Activated CD4-positive, alpha-beta T cell treated with anti-CD3 and anti-CD28 coated beads, Interleukin-2, amount 10 ng/mL, durations not matched to agents 7 days and 5 days (primary cell): ENCODE measurements at regions of chr3 and their contacts with region 1.

Region 1: DNA sequence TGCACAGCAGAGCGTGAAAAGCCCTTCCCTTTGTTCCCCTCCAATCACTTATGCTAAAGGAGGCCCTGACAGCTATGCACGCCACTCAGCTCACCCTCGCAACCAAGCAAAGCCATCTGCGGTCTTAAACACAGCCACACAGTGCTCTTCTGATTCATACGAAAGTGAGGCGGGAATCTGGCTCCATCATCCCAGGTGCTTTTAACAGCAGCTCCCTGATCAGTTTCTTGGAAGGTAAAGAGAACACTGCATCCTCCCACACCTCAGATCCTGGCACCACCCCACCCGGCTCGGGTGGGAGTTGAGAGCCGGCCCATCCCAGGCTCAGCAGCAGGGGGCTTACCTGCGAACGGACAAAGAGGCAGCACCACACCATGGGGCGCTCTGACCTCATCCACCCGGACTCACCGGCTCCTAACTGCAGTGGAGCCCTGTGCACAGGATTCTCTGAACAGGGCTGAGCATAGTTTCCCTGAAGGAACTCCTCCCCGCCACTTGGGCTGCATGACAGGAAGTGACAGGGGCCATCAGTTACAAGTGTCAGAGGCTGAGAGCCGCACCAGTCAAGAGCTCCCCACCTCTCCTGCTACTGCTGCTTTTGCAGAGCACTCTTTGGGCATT is 114.3 kb upstream of the ARHGEF3 start:
- DNase-seq: peak; percentile 87
- H3K4me3 Mint-ChIP-seq: peak overlapping the region; percentile 91
- H3K27ac Mint-ChIP-seq: peak overlapping the region; percentile 98
- H3K4me1 Mint-ChIP-seq: peaks cover 79% of the 10 kb centered on the region
- H3K27me3 Mint-ChIP-seq: no peaks in the 10 kb centered on the region

Region 2: GRCh38 chr3:56890448-56891091 is 25.5 kb before region 1 on chr3:
- CTCF ChIA-PET with region 1: interaction called, 10 read pairs
- POLR2A ChIA-PET with region 1: no interaction called
- DNase-seq: peak; percentile 25
- H3K4me3 Mint-ChIP-seq: no peak overlapping the region
- H3K27ac Mint-ChIP-seq: no peak overlapping the region
- H3K4me1 Mint-ChIP-seq: peaks cover 74% of the 10 kb centered on the region
- H3K27me3 Mint-ChIP-seq: no peaks in the 10 kb centered on the region

Region 3: GRCh38 chr3:56904552-56905215 is 11.4 kb before region 1 on chr3:
- CTCF ChIA-PET with region 1: interaction called, 19 read pairs
- POLR2A ChIA-PET with region 1: no interaction called
- DNase-seq: no peak
- H3K4me3 Mint-ChIP-seq: no peak overlapping the region
- H3K27ac Mint-ChIP-seq: no peak overlapping the region
- H3K4me1 Mint-ChIP-seq: peaks cover 50% of the 10 kb centered on the region
- H3K27me3 Mint-ChIP-seq: no peaks in the 10 kb centered on the region

Region 4: GRCh38 chr3:57047974-57048671 is 132.0 kb after region 1 on chr3:
- CTCF ChIA-PET with region 1: no interaction called
- POLR2A ChIA-PET with region 1: no interaction called
- DNase-seq: no peak
- H3K4me3 Mint-ChIP-seq: no peak overlapping the region
- H3K27ac Mint-ChIP-seq: no peak overlapping the region
- H3K4me1 Mint-ChIP-seq: no peaks in the 10 kb centered on the region
- H3K27me3 Mint-ChIP-seq: peaks cover 4% of the 10 kb centered on the region